Posterior vena cava (tissue), 2 donors: ENCODE measurements at regions of chr10 and their contacts with region 1.

Region 1: GRCh38 chr10:123087786-123088185 is 48.0 kb upstream of the HMX3 start:
- DNase-seq: no peak

Region 2: DNA sequence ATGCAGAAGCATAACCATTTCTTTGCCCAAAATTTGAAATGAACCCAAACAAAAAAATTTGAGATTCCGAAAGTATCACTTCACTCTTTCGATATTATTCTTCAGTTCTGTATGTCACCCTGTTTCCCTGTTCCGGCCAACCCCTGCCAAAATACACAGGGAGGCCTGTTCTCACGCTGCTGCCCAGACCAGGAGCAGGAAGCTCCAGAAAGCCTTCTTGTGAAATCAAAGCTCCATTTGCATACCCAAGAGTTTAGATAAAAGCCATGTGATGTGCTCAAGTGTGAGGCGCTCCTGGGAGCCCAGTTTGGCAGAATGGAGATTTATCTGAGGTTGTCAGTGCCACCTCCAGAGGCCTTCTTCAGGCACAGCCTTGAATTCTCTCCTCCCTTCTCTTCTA is 1725.8 kb before region 1 on chr10:
- intact Hi-C with region 1: loop called in 1 of 2 experiments (anchors 5 kb)
- DNase-seq: no peak

Region 3: GRCh38 chr10:122674781-122675180 is 413.0 kb before region 1 on chr10:
- intact Hi-C with region 1: no loop called
- DNase-seq: no peak

Region 4: GRCh38 chr10:124864421-124865193 is 1776.8 kb after region 1 on chr10:
- intact Hi-C with region 1: loop called in 1 of 2 experiments (anchors 5 kb)
- DNase-seq: no peak